GM12878 (cell line): ENCODE measurements at regions of chr12 and their contacts with region 1.

Region 1: DNA sequence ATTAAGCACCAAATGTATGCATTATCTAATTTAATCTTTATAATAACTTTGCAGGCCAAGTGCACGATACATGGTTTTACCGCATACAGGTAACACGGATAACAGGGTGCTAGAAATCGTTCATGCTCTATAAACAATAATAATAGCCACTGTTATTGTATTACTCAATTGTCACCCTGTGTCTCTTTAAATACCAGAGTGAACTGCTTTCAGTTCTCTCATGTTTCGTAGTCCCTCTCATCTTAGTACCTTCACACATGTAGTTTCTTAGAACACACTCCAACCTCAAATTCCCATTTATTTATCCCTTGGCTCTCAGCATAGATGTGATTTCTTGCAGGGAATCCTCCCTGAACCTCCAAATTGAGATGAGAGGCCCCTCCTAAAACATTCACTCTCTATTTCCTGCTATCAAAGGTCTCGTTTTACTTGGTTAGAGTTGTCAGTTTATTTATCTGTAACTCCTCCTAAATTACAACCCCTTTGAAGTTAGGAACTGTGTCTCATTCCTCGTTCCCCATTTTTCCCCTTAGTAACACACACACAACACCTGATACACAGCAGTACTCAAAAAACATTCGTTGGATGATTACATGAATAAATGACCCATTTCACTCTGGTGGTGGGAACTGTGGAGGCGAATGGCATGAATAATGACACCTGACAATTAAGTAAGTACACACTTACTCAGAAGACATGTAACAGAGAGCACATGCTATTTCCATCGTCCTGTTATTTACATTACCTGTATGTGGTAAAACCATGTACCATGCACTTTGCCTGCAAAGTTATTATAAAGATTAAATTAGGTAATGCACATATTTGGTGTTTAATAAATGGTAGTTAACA is 134.6 kb downstream of the BTG1 start:
- DNase-seq: no peak
- ATAC-seq: peak; percentile 79
- H3K4me3 ChIP-seq: no peak overlapping the region
- H3K27ac ChIP-seq: no peak overlapping the region
- H3K4me1 ChIP-seq: peaks cover 3% of the 10 kb centered on the region; the same call in 1 of the 2 replicates
- H3K27me3 ChIP-seq: no peaks in the 10 kb centered on the region
- CTCF ChIP-seq: no peak
- EP300 ChIP-seq: no peak
- POLR2A ChIP-seq: no peak
- RAD21 ChIP-seq: no peak

Region 2: GRCh38 chr12:91866566-91866965 is 144.5 kb before region 1 on chr12:
- CTCF ChIA-PET with region 1: no interaction called
- POLR2A ChIA-PET with region 1: no interaction called
- RAD21 ChIA-PET with region 1: no interaction called
- SMC1A ChIA-PET with region 1: no interaction called
- in situ Hi-C with region 1: no loop called
- intact Hi-C with region 1: no loop called
- DNase-seq: no peak
- ATAC-seq: no peak
- H3K4me3 ChIP-seq: no peak overlapping the region
- H3K27ac ChIP-seq: no peak overlapping the region
- H3K4me1 ChIP-seq: no peaks in the 10 kb centered on the region
- H3K27me3 ChIP-seq: no peaks in the 10 kb centered on the region
- CTCF ChIP-seq: no peak
- EP300 ChIP-seq: no peak
- POLR2A ChIP-seq: no peak
- RAD21 ChIP-seq: no peak

Region 3: DNA sequence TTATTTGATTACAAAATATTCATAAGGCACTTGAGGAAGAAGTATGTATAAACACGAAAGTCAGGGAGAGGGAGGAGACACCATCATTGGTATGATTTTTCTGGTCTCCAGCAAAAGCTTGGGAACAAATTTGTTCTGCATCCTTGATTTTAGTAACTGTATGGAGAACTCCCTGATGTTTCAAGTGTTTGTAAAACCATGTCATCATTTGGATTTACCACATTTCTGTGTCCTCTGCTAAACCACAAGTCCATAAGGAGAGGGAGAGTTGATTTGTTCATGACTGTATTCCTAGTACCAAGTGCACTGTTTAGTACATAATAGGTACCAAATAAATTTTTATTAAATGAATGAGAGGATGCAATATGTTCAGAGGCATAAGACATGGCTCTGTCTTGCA is 46.6 kb before region 1 on chr12:
- CTCF ChIA-PET with region 1: no interaction called
- POLR2A ChIA-PET with region 1: no interaction called
- RAD21 ChIA-PET with region 1: no interaction called
- SMC1A ChIA-PET with region 1: no interaction called
- in situ Hi-C with region 1: no loop called
- intact Hi-C with region 1: no loop called
- DNase-seq: no peak
- ATAC-seq: no peak
- H3K4me3 ChIP-seq: no peak overlapping the region
- H3K27ac ChIP-seq: no peak overlapping the region
- H3K4me1 ChIP-seq: no peaks in the 10 kb centered on the region
- H3K27me3 ChIP-seq: no peaks in the 10 kb centered on the region
- CTCF ChIP-seq: no peak
- EP300 ChIP-seq: no peak
- POLR2A ChIP-seq: no peak
- RAD21 ChIP-seq: no peak

Region 4: GRCh38 chr12:91991399-91992187 is 19.5 kb before region 1 on chr12:
- CTCF ChIA-PET with region 1: no interaction called
- POLR2A ChIA-PET with region 1: no interaction called
- RAD21 ChIA-PET with region 1: no interaction called
- SMC1A ChIA-PET with region 1: interaction called, 13 read pairs
- in situ Hi-C with region 1: no loop called
- intact Hi-C with region 1: no loop called
- DNase-seq: peak; percentile 32
- ATAC-seq: peak; percentile 94
- H3K4me3 ChIP-seq: no peak overlapping the region
- H3K27ac ChIP-seq: no peak overlapping the region
- H3K4me1 ChIP-seq: no peaks in the 10 kb centered on the region
- H3K27me3 ChIP-seq: no peaks in the 10 kb centered on the region
- CTCF ChIP-seq: peak in 2 of 3 experiments; percentile 35 to 56; a peak in 3 of 6 replicates
- EP300 ChIP-seq: no peak
- POLR2A ChIP-seq: no peak
- RAD21 ChIP-seq: peak; percentile 61

Region 5: GRCh38 chr12:92000597-92000996 is 10.5 kb before region 1 on chr12:
- CTCF ChIA-PET with region 1: interaction called, 3 read pairs
- POLR2A ChIA-PET with region 1: interaction called, 3 read pairs
- RAD21 ChIA-PET with region 1: interaction called, 5 read pairs
- SMC1A ChIA-PET with region 1: interaction called, 13 read pairs
- in situ Hi-C with region 1: no loop called
- intact Hi-C with region 1: no loop called
- DNase-seq: no peak
- ATAC-seq: peak; percentile 61
- H3K4me3 ChIP-seq: no peak overlapping the region
- H3K27ac ChIP-seq: no peak overlapping the region
- H3K4me1 ChIP-seq: no peaks in the 10 kb centered on the region
- H3K27me3 ChIP-seq: no peaks in the 10 kb centered on the region
- CTCF ChIP-seq: no peak
- EP300 ChIP-seq: no peak
- POLR2A ChIP-seq: no peak
- RAD21 ChIP-seq: no peak

Region 6: GRCh38 chr12:92021665-92022033 is 10.6 kb after region 1 on chr12:
- CTCF ChIA-PET with region 1: interaction called, 10 read pairs
- POLR2A ChIA-PET with region 1: interaction called, 7 read pairs
- RAD21 ChIA-PET with region 1: interaction called, 7 read pairs
- SMC1A ChIA-PET with region 1: interaction called, 9 read pairs
- in situ Hi-C with region 1: no loop called
- intact Hi-C with region 1: no loop called
- DNase-seq: no peak
- ATAC-seq: no peak
- H3K4me3 ChIP-seq: no peak overlapping the region
- H3K27ac ChIP-seq: no peak overlapping the region
- H3K4me1 ChIP-seq: no peaks in the 10 kb centered on the region
- H3K27me3 ChIP-seq: no peaks in the 10 kb centered on the region
- CTCF ChIP-seq: no peak
- EP300 ChIP-seq: no peak
- POLR2A ChIP-seq: no peak
- RAD21 ChIP-seq: no peak